ENCODE measurements at regions of chr5 and their contacts with region 1.

Region 1: DNA sequence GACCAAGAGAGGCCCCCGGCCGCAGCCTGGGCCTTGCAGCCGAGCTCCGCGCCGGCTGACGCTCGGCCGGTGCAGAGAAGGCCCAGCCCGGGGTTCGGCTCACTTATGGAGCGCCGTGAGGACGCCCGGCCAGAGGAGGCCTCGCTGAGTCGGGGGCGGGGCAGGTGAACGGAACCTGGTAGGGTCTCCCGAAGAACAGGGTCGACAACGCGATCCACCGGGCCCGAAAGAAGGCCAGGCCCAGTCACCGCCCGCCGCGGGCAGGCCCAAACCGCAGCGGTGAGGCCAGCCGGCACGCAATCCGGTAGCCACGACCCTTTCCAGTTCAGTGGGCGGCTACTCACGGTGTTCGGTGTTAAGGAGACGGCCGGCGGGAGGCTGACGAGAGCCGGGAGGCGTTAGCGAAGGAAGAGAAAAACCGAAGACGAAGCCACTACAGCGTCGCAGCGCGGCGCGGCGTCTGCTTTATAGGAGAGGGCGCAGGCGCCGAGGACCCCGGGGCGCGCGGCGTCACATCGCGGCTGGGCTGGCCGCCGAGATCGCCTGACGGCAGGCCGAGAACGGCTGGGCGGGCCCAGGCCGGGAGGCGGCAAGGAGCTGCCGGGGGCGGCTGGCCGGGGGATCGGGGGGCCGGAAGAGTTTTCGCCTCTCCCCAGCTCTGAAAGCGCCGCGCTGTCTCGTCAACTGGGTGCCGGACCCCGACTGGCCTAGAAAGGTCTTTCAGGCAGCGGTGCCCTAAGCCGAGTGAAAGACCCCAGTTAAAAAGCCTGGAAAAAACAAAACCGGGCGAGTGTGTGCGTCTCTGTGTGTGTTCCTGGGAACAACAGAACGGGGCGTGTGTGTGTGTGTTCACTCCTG is at the start of gene SKP1:
- DNase-seq: peak; percentile 77
- H3K4me3 ChIP-seq: peak within 1 kb of the TSS; percentile 95 to 97
- H3K27ac ChIP-seq: peak within 1 kb of the TSS; percentile 99
- H3K4me1 ChIP-seq: peaks cover 7% of the 10 kb centered on the region
- H3K27me3 ChIP-seq: no peaks in the 10 kb centered on the region
- CTCF ChIP-seq: peak in 1 of 4 experiments; percentile 31
- POLR2A ChIP-seq: peak; percentile 94
- total RNA-seq, gene SKP1: 343 to 391 TPM

Region 2: GRCh38 chr5:133179405-133179804 is 997.3 kb before region 1 on chr5:
- intact Hi-C with region 1: no loop called
- DNase-seq: no peak
- H3K4me3 ChIP-seq: no peak overlapping the region
- H3K27ac ChIP-seq: no peak overlapping the region
- H3K4me1 ChIP-seq: no peaks in the 10 kb centered on the region
- H3K27me3 ChIP-seq: no peaks in the 10 kb centered on the region
- CTCF ChIP-seq: no peak
- POLR2A ChIP-seq: no peak

Region 3: DNA sequence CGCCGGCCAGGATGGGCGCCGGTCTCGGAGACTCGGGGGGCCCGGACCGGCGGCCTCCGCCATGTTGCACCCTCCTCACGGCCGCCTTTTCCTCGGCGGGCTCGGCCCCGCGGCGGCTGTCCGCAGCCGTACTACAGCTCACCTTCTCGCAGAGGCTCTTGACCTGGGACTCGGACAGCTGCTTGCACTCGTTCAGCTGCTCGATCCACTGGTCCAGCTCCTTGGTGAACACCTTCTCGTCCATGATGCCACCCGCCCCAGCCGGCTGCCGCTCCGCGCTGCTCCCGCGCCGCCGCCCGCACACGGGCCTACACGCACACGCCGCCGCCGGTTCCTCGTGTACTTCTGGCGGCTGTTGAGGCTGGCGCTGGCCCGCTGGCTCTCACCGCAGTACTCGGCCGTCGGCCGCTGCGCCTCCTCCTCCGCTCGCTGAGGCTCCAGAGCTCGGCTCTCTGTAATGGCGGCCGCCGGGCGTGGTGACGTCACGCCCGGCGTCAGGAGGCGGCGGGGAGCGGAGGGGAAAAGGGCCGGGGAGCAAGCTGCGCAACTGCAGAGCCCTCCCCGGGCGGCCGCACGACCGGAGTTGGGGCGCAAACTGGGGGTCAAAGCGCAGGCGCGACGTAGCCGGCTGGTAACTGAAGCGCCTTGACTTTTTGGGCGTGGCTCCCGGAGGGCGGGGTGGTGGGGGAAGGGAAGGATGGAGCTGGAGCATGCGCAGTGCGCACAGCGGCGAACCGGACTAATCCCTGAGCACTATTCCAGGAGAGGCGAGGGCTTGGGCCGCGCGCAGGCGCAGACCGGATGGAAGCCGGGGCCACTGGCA is 49.1 kb after region 1 on chr5 and contains the start of gene PPP2CA:
- intact Hi-C with region 1: loop called (anchors 2 kb)
- DNase-seq: peak; percentile 98
- H3K4me3 ChIP-seq: peak within 1 kb of the TSS; percentile 85 to 100
- H3K27ac ChIP-seq: peak within 1 kb of the TSS; percentile 99 to 100
- H3K4me1 ChIP-seq: peaks cover 6% of the 10 kb centered on the region
- H3K27me3 ChIP-seq: no peaks in the 10 kb centered on the region
- CTCF ChIP-seq: no peak
- POLR2A ChIP-seq: peak; percentile 64
- total RNA-seq, gene PPP2CA: 119 to 175 TPM

Region 4: GRCh38 chr5:134370871-134371833 is 194.4 kb after region 1 on chr5 and contains the start of gene UBE2B:
- intact Hi-C with region 1: loop called (anchors 10 kb)
- DNase-seq: peak; percentile 99
- H3K4me3 ChIP-seq: peak within 1 kb of the TSS; percentile 75 to 76
- H3K27ac ChIP-seq: peak within 1 kb of the TSS; percentile 96 to 97
- H3K4me1 ChIP-seq: no peaks in the 10 kb centered on the region
- H3K27me3 ChIP-seq: no peaks in the 10 kb centered on the region
- CTCF ChIP-seq: peak in 2 of 4 experiments; percentile 18 to 23
- POLR2A ChIP-seq: peak; percentile 86
- total RNA-seq, gene UBE2B: 27.4 to 57.7 TPM

Region 5: GRCh38 chr5:134577796-134578363 is 401.1 kb after region 1 on chr5:
- intact Hi-C with region 1: loop called (anchors 10 kb)
- DNase-seq: peak; percentile 78
- H3K4me3 ChIP-seq: no peak overlapping the region
- H3K27ac ChIP-seq: no peak overlapping the region
- H3K4me1 ChIP-seq: no peaks in the 10 kb centered on the region
- H3K27me3 ChIP-seq: no peaks in the 10 kb centered on the region
- CTCF ChIP-seq: peak; percentile 61 to 86 (median 82)
- POLR2A ChIP-seq: no peak

Measured in prostate gland (tissue), 2 donors.